PC-3 (cell line): ENCODE measurements at regions of chr14 and their contacts with region 1.

Region 1: DNA sequence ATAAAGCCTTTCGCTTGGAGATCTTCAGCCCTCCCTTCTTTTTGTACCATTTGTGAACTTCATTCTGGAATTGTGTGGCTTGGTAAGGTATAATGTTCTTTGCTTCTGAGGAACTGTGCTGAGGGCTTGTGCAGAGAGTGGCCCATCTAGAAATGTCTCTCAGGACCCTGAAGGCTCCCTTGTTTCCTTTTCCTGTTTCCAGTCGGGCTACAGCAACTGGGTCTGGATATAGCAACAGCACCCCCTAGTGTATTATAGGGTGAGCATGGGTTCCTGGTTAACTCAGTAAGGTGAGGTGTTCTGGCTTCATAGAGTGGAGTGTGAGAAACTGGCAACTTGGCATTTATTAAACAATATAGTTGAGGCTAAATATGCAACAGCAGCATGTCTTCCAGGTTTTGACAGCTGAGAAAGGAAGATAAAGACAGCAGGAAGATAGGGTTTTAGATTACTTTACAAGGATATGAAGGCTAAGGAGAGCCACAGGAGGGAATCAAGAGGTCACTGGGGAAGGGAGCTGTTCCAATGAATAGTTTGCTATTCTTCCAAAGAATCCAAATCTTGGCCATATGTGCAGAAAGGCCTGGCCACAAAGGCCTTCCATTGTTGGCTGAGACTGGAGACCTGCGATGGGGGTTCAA is 49.1 kb upstream of the RNU6-8 start:
- DNase-seq: peak; percentile 85
- ATAC-seq: peak; percentile 79
- H3K4me3 ChIP-seq: no peak overlapping the region
- H3K27ac ChIP-seq: no peak overlapping the region
- H3K4me1 ChIP-seq: peaks cover 9% of the 10 kb centered on the region
- H3K27me3 ChIP-seq: no peaks in the 10 kb centered on the region
- CTCF ChIP-seq: peak; percentile 97

Region 2: GRCh38 chr14:31456841-31457664 is 795.1 kb before region 1 on chr14 and contains the start of gene DTD2:
- CTCF ChIA-PET with region 1: no interaction called
- POLR2A ChIA-PET with region 1: no interaction called
- intact Hi-C with region 1: loop called (anchors 5 kb)
- DNase-seq: peak; percentile 99
- ATAC-seq: peak; percentile 99
- H3K4me3 ChIP-seq: peak within 1 kb of the TSS; percentile 93
- H3K27ac ChIP-seq: peak within 1 kb of the TSS; percentile 74
- H3K4me1 ChIP-seq: peaks cover 20% of the 10 kb centered on the region
- H3K27me3 ChIP-seq: no peaks in the 10 kb centered on the region
- CTCF ChIP-seq: no peak; the same call in 1 of the 2 replicates
- total RNA-seq, gene DTD2: 35.9 and 36.8 TPM in 2 replicates

Region 3: DNA sequence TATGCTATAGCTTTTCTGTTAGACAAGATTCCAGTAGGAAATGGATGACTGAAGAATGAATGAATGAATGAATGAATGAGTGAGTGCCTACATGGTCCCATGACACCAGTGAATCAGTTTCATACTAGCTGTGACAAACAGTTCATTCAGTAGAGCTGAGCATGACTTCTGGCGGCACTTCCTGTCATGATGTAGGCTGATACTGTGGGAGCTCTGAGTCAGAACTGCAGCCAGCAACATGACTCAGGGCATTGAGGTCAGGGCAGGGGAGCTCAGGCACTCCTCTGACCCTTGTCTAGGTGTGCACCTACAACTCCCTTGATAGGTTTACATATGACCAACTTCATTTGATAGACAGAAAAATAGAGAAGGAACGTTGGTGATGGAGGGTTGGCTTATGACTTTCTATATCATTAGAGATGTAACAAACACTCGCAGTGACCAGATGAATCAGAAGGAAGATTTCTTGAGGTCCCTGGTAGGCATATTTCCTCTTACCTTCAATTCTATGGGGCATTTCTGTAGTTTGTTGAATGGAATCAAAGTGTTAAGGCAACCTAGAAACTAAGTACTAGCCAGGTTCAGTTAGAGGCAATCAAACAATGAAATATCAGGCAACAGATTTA is 314.3 kb before region 1 on chr14:
- CTCF ChIA-PET with region 1: interaction called, 3 read pairs
- POLR2A ChIA-PET with region 1: no interaction called
- intact Hi-C with region 1: loop called (anchors 1 kb)
- DNase-seq: peak; percentile 94
- ATAC-seq: peak; percentile 92
- H3K4me3 ChIP-seq: no peak overlapping the region
- H3K27ac ChIP-seq: peak overlapping the region; percentile 75
- H3K4me1 ChIP-seq: peaks cover 40% of the 10 kb centered on the region
- H3K27me3 ChIP-seq: no peaks in the 10 kb centered on the region
- CTCF ChIP-seq: no peak

Region 4: DNA sequence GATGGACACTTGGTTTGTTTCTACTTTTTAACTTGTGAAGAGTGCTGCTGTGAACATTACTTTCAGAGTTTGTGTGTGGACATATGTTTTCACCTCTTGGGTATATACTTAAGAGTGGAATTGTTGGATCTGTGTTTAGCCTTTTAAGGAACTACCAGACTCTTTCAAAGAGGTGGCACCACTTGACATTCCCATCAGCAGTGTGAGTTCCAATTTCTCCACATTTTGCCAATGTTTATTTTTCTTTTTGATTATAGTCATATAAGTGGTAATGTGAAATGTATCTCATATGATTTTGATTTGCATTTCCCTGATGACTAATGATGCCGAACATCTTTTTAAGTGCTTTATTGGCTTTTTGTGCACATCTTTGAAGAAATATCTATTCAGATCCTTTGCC is 130.2 kb before region 1 on chr14:
- CTCF ChIA-PET with region 1: no interaction called
- POLR2A ChIA-PET with region 1: no interaction called
- intact Hi-C with region 1: no loop called
- DNase-seq: no peak
- ATAC-seq: no peak
- H3K4me3 ChIP-seq: no peak overlapping the region
- H3K27ac ChIP-seq: no peak overlapping the region
- H3K4me1 ChIP-seq: no peaks in the 10 kb centered on the region
- H3K27me3 ChIP-seq: no peaks in the 10 kb centered on the region
- CTCF ChIP-seq: no peak

Region 5: DNA sequence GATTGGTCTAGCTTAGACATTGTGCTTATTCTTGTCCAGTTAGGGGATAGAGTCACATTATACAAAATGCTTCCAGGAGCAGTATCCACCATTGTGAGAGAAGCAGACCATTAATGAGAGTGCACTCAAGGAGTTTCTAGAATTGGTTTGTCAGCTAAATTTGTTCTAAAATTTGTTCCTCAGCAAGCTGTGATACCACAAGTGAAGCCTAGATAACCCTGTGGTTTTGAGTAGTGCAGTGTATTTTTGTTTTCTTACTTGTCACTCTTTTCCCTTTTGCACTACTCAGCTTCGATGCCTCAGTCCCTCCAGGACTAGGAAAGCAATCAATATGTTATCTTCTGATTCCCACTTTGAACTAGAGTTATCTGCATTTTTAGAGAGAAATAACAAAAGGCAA is 34.5 kb after region 1 on chr14:
- CTCF ChIA-PET with region 1: no interaction called
- POLR2A ChIA-PET with region 1: no interaction called
- intact Hi-C with region 1: no loop called
- DNase-seq: no peak
- ATAC-seq: no peak
- H3K4me3 ChIP-seq: no peak overlapping the region
- H3K27ac ChIP-seq: no peak overlapping the region
- H3K4me1 ChIP-seq: no peaks in the 10 kb centered on the region
- H3K27me3 ChIP-seq: no peaks in the 10 kb centered on the region
- CTCF ChIP-seq: no peak

Region 6: GRCh38 chr14:32307881-32308582 is 55.9 kb after region 1 on chr14:
- CTCF ChIA-PET with region 1: no interaction called
- POLR2A ChIA-PET with region 1: no interaction called
- intact Hi-C with region 1: loop called (anchors 1 kb)
- DNase-seq: peak; percentile 77
- ATAC-seq: peak; percentile 88
- H3K4me3 ChIP-seq: peak overlapping the region; percentile 7; the same call in 1 of the 2 replicates
- H3K27ac ChIP-seq: peak overlapping the region; percentile 68
- H3K4me1 ChIP-seq: peaks cover 23% of the 10 kb centered on the region
- H3K27me3 ChIP-seq: no peaks in the 10 kb centered on the region
- CTCF ChIP-seq: no peak

Region 7: GRCh38 chr14:32397861-32398640 is 145.9 kb after region 1 on chr14:
- CTCF ChIA-PET with region 1: no interaction called
- POLR2A ChIA-PET with region 1: no interaction called
- intact Hi-C with region 1: loop called (anchors 5 kb)
- DNase-seq: peak; percentile 94
- ATAC-seq: peak; percentile 93
- H3K4me3 ChIP-seq: no peak overlapping the region
- H3K27ac ChIP-seq: peak overlapping the region; percentile 36
- H3K4me1 ChIP-seq: peaks cover 37% of the 10 kb centered on the region
- H3K27me3 ChIP-seq: no peaks in the 10 kb centered on the region
- CTCF ChIP-seq: no peak

Region 8: GRCh38 chr14:32450919-32451675 is 198.9 kb after region 1 on chr14:
- CTCF ChIA-PET with region 1: no interaction called
- POLR2A ChIA-PET with region 1: no interaction called
- intact Hi-C with region 1: no loop called
- DNase-seq: no peak
- ATAC-seq: no peak
- H3K4me3 ChIP-seq: no peak overlapping the region
- H3K27ac ChIP-seq: no peak overlapping the region
- H3K4me1 ChIP-seq: no peaks in the 10 kb centered on the region
- H3K27me3 ChIP-seq: no peaks in the 10 kb centered on the region
- CTCF ChIP-seq: no peak

Region 9: DNA sequence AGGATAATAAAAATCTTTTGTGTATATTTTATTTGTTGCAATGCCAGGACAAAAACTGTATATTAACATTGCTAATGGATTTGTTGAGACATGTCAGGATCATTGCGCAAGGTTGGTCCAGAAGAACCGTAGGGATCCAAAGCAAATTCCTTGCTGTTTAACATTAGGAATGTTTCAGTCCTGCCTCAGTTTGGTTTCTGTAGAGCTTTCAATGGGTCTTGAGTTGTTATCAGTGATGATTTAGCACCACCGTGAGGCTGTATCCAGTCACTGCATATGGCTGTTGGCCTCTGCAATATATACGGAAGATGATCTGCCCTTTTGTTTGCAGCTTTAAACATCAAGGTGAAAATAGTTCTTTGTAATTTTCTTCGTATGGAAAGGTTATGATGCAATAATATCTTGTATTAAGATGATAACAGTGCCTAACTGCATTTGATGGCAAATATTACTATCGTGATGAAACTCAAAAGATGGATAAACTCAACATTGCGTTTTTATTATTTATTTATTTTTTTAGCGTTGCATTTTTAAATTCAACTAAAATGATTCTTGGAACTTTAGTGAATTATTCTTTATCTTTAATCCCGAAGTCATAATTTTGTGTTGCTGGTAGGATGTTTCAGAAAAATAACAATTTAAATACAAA is 308.2 kb after region 1 on chr14:
- CTCF ChIA-PET with region 1: interaction called, 8 read pairs
- POLR2A ChIA-PET with region 1: no interaction called
- intact Hi-C with region 1: loop called (anchors 1 kb)
- DNase-seq: peak; percentile 84
- ATAC-seq: peak; percentile 61
- H3K4me3 ChIP-seq: no peak overlapping the region
- H3K27ac ChIP-seq: no peak overlapping the region
- H3K4me1 ChIP-seq: peaks cover 30% of the 10 kb centered on the region
- H3K27me3 ChIP-seq: no peaks in the 10 kb centered on the region
- CTCF ChIP-seq: peak; percentile 97

Region 10: GRCh38 chr14:32932302-32932913 is 680.3 kb after region 1 on chr14:
- CTCF ChIA-PET with region 1: no interaction called
- POLR2A ChIA-PET with region 1: no interaction called
- intact Hi-C with region 1: no loop called
- DNase-seq: no peak
- ATAC-seq: no peak
- H3K4me3 ChIP-seq: no peak overlapping the region
- H3K27ac ChIP-seq: no peak overlapping the region
- H3K4me1 ChIP-seq: 0 out of 2 replicates have a peak, but pooled peaks cover 4% of the 10 kb centered on the region
- H3K27me3 ChIP-seq: peaks cover 47% of the 10 kb centered on the region
- CTCF ChIP-seq: no peak